ENCODE measurements at regions of chr1 and their contacts with region 1.

Region 1: DNA sequence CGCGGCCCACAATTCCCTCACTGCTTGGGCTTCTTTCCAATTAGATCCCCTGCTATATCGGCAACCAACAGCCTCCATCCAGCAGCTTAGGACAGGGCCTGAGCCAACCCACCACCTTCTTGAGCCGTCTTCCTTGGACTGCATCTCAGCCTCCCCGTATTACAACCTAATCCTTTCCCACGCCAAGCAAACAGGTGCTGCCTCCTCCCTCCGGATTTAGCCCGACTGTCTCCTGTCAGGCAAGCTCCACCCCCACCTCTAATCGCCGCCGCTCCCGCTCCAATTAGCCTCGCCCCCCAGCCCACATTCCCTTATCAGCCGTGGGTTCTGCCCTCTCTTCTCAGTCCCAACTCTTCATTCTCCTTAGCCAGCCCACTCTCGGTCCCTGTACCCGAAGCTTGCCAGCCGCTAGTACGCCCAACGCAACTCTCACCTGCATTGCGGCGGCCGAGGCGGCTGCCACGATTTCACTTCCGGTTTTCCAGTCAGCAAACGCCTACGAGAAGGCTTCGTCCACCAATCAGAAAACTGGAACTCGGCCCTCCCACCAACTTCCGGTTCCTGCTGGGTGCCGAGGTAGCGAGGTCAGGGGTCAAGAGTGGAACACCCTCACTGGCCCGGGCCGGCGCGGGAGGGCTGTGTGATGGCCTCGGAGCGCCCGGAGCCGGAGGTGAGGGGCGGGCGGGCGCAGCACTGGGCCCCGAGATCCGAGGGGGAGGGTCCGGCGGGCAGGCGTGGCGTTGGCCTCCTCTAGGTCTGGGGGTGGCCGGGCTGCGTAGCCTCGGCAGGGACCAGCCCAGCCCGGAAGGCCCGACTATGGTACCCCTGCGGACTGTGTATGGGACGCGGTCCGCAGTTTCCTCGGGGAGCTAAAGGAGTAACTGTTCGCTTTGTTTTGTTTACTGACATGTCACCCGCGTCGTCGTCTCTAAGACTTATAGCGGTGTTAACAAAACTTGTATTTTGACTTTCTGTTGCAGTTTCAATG is at the starts of genes MED8 and SZT2:
- DNase-seq: peak; percentile 75 to 91 (median 88)
- ATAC-seq: peak; percentile 98
- H3K4me3 ChIP-seq: peak within 1 kb of the TSS; percentile 96
- H3K4me3 Mint-ChIP-seq: peak within 1 kb of the TSS; percentile 95 to 100 (median 100)
- H3K27ac ChIP-seq: peak within 1 kb of the TSS; percentile 93
- H3K27ac Mint-ChIP-seq: peak within 1 kb of the TSS; percentile 95 to 100 (median 99)
- H3K4me1 ChIP-seq: peaks cover 20 to 21% of the 10 kb centered on the region in 2 donors
- H3K4me1 Mint-ChIP-seq: peaks cover 42 to 69% (median 56%) of the 10 kb centered on the region in 7 donors
- H3K27me3 ChIP-seq: no peaks in the 10 kb centered on the region
- H3K27me3 Mint-ChIP-seq: no peaks in the 10 kb centered on the region
- total RNA-seq, gene MED8: 14.5 to 37.8 (median 30.1) TPM
- total RNA-seq, gene SZT2: 80.5 to 153 (median 131) TPM

Region 2: GRCh38 chr1:43256675-43257570 is 132.7 kb before region 1 on chr1:
- CTCF ChIA-PET with region 1: no interaction called
- POLR2A ChIA-PET with region 1: no interaction called
- intact Hi-C with region 1: no loop called
- DNase-seq: no peak
- ATAC-seq: no peak
- H3K4me3 ChIP-seq: no peak overlapping the region
- H3K4me3 Mint-ChIP-seq: no peak overlapping the region
- H3K27ac ChIP-seq: no peak overlapping the region
- H3K27ac Mint-ChIP-seq: no peak overlapping the region
- H3K4me1 ChIP-seq: no peaks in the 10 kb centered on the region
- H3K4me1 Mint-ChIP-seq: no peaks in the 10 kb centered on the region
- H3K27me3 ChIP-seq: no peaks in the 10 kb centered on the region
- H3K27me3 Mint-ChIP-seq: peaks cover 0 to 22% (median 0%) of the 10 kb centered on the region in 5 donors

Region 3: GRCh38 chr1:43293896-43294760 is 95.5 kb before region 1 on chr1:
- CTCF ChIA-PET with region 1: no interaction called
- POLR2A ChIA-PET with region 1: no interaction called
- intact Hi-C with region 1: no loop called
- DNase-seq: no peak
- ATAC-seq: no peak
- H3K4me3 ChIP-seq: no peak overlapping the region
- H3K4me3 Mint-ChIP-seq: peak overlapping the region in 1 of 10 donors; percentile 32
- H3K27ac ChIP-seq: peak overlapping the region; percentile 7
- H3K27ac Mint-ChIP-seq: peak overlapping the region in 5 of 9 donors; percentile 14 to 89 (median 75)
- H3K4me1 ChIP-seq: peaks cover 8 to 16% of the 10 kb centered on the region in 2 donors
- H3K4me1 Mint-ChIP-seq: peaks cover 4 to 29% (median 22%) of the 10 kb centered on the region in 7 donors
- H3K27me3 ChIP-seq: no peaks in the 10 kb centered on the region
- H3K27me3 Mint-ChIP-seq: no peaks in the 10 kb centered on the region

Region 4: DNA sequence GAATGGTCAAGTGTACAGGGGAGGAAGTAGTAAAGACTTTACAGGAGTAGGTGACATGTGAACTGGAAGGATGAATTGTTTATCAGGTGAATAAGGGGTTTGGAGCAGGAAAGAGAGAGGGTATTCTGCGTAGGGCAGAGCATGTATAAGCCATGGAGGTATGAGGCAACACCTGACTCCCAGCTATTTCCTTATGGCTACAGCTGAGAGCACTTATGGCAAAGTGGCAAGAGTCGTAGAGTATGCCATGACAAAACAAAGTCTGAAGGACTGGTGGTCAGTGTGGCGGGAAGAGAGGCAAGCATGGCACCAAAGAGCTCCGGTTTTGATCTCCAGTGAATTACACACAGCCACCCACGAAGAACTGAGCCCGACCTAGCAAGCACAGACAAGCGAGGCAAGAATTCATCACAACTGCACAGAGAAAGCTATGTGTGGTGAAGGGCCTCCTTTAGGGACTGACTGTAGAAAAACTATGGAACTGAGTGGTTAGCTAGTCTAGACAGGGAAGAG is 12.8 kb before region 1 on chr1:
- CTCF ChIA-PET with region 1: interaction called, 3 read pairs
- POLR2A ChIA-PET with region 1: interaction called, 23 read pairs
- intact Hi-C with region 1: no loop called
- DNase-seq: no peak
- ATAC-seq: no peak
- H3K4me3 ChIP-seq: no peak overlapping the region
- H3K4me3 Mint-ChIP-seq: no peak overlapping the region
- H3K27ac ChIP-seq: no peak overlapping the region
- H3K27ac Mint-ChIP-seq: peak overlapping the region in 1 of 9 donors; percentile 51
- H3K4me1 ChIP-seq: no peaks in the 10 kb centered on the region
- H3K4me1 Mint-ChIP-seq: peaks cover 7 to 31% (median 14%) of the 10 kb centered on the region in 7 donors
- H3K27me3 ChIP-seq: no peaks in the 10 kb centered on the region
- H3K27me3 Mint-ChIP-seq: no peaks in the 10 kb centered on the region

Region 5: GRCh38 chr1:43405219-43405875 is 15.7 kb after region 1 on chr1:
- CTCF ChIA-PET with region 1: no interaction called
- POLR2A ChIA-PET with region 1: no interaction called
- intact Hi-C with region 1: no loop called
- DNase-seq: no peak
- ATAC-seq: no peak
- H3K4me3 ChIP-seq: no peak overlapping the region
- H3K4me3 Mint-ChIP-seq: no peak overlapping the region
- H3K27ac ChIP-seq: no peak overlapping the region
- H3K27ac Mint-ChIP-seq: no peak overlapping the region
- H3K4me1 ChIP-seq: no peaks in the 10 kb centered on the region
- H3K4me1 Mint-ChIP-seq: peaks cover 2 to 21% (median 13%) of the 10 kb centered on the region in 7 donors
- H3K27me3 ChIP-seq: no peaks in the 10 kb centered on the region
- H3K27me3 Mint-ChIP-seq: no peaks in the 10 kb centered on the region

Measured in naive thymus-derived CD4-positive, alpha-beta T cell (primary cell).